ENCODE measurements at regions of chr15 and their contacts with region 1.

Region 1: GRCh38 chr15:33551860-33552259 is 241.1 kb downstream of the RYR3 start:
- DNase-seq: no peak
- H3K4me3 ChIP-seq: no peak overlapping the region
- H3K27ac ChIP-seq: no peak overlapping the region
- H3K4me1 ChIP-seq: no peaks in the 10 kb centered on the region
- CTCF ChIP-seq: no peak

Region 2: GRCh38 chr15:33680336-33680735 is 128.5 kb after region 1 on chr15:
- CTCF ChIA-PET with region 1: no interaction called
- POLR2A ChIA-PET with region 1: no interaction called
- intact Hi-C with region 1: loop called (anchors 5 kb)
- DNase-seq: no peak
- H3K4me3 ChIP-seq: no peak overlapping the region
- H3K27ac ChIP-seq: no peak overlapping the region
- H3K4me1 ChIP-seq: peaks cover 28% of the 10 kb centered on the region
- CTCF ChIP-seq: no peak

Region 3: DNA sequence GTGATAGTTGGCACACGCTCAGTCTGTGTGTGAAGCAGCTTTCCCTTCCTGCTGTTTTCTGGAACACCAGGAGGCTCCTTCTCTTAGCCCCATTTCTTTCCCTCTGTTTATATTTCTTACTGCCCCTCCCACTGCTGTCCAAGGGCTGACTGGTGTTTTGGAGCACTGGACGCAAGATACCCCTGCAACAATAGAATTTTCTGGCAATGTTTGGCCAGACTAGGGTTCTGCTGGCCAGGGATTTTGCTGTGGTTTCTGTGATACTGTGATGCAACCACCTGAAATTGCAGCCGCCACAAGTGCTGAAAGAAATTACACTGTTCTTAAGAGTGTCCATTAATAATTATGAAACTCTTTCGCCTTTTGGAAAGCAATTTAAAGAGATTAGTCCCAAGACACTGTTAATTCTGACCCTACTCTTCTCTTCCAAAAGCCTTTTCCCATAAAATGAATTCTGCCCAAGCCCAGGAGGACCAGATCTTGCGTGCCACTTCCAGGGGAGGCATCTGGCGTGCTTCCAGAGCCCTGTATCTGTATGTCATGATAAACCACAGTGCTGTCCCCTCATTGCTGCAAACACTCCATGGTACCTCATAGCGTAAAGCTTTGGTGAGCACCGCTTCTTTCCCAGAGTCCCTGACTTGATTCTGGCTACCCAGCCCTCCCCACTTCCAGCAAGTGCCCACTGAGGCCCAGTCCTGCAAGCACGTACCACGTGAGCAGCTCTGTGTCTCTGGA is 257.0 kb after region 1 on chr15:
- CTCF ChIA-PET with region 1: no interaction called
- POLR2A ChIA-PET with region 1: no interaction called
- intact Hi-C with region 1: no loop called
- DNase-seq: no peak
- H3K4me3 ChIP-seq: no peak overlapping the region
- H3K27ac ChIP-seq: no peak overlapping the region
- H3K4me1 ChIP-seq: no peaks in the 10 kb centered on the region
- CTCF ChIP-seq: no peak

Region 4: DNA sequence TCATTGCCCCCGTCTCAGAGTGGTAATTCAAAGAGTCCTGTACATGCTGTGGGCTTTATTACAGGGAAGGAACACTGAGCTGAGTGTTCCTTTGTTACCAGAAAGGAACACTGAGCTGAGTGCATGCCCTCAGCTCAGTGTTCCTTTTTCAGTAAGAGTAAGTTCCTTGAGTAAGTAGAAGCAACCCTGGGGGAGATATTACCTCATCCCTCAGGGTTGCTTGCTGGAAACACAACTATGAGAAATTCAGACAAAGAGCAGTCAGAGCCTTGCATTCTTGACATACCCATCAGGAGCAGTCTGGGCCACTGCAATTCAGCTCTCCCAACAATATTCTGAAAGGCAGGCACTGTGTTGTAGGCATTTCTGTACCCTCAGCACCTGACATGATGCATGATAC is 433.4 kb after region 1 on chr15:
- CTCF ChIA-PET with region 1: no interaction called
- POLR2A ChIA-PET with region 1: no interaction called
- intact Hi-C with region 1: no loop called
- DNase-seq: no peak
- H3K4me3 ChIP-seq: no peak overlapping the region
- H3K27ac ChIP-seq: no peak overlapping the region
- H3K4me1 ChIP-seq: no peaks in the 10 kb centered on the region
- CTCF ChIP-seq: no peak

Measured in OCI-LY7 (cell line).